ENCODE measurements at regions of chr19 and their contacts with region 1.

Region 1: DNA sequence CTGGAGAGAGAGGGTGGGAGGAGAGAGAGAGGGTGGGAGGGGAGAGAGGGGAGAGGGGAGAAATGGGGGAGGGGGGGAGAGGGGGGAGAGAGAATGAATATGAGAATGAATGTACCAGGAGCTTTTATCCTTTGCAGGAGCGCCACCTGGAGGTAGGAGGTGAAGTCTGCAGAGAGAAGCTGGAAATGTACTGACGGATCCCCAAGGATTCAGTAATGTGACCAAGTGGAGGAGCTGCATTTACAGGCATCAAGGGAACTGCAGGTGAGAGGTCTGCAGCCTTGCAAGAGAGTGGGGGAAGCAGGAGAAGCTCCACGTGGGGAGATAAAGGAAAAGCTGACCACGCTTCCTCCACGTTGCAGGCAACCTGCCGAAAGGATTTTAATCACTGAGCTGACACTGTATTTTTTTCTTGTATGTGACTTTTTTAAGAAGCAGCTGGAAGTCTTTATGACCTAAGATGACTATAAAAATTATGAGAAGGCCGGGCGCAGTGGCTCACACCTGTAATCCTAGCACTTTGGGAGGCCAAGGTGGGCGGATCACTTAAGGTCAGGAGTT is 33.7 kb downstream of the VSTM1 start:
- DNase-seq: peak; percentile 53
- ATAC-seq: no peak

Region 2: DNA sequence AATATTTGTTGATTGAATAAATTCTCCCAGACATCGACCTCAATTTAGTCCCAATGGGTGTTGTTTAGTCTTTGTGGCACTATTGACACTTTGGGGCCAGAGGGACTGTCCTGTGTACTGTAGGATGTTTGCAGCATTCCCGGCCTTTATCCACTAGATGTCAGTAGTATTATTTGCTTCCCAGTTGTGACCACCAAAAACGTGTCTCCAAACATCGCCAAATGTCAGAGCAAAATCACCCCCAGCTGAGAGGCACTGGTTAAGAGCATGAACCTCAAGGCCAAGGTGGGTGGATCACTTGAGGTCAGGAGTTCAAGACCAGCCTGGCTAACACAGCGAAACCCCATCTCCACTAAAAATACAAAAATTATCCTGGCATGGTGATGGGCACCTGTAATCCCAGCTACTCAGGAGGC is 221.3 kb before region 1 on chr19:
- intact Hi-C with region 1: loop called in 1 of 2 experiments (anchors 10 kb)
- DNase-seq: no peak
- ATAC-seq: peak in 1 of 2 donors; percentile 22

Region 3: GRCh38 chr19:53849237-53849676 is 180.8 kb before region 1 on chr19:
- intact Hi-C with region 1: no loop called
- DNase-seq: peak; percentile 38
- ATAC-seq: peak; percentile 41 to 75

Region 4: GRCh38 chr19:53906211-53907192 is 123.5 kb before region 1 on chr19:
- intact Hi-C with region 1: loop called (anchors 10 kb)
- DNase-seq: peak; percentile 51
- ATAC-seq: peak; percentile 51 to 62